Caco-2 (cell line): ENCODE measurements at regions of chrX and their contacts with region 1.

Region 1: DNA sequence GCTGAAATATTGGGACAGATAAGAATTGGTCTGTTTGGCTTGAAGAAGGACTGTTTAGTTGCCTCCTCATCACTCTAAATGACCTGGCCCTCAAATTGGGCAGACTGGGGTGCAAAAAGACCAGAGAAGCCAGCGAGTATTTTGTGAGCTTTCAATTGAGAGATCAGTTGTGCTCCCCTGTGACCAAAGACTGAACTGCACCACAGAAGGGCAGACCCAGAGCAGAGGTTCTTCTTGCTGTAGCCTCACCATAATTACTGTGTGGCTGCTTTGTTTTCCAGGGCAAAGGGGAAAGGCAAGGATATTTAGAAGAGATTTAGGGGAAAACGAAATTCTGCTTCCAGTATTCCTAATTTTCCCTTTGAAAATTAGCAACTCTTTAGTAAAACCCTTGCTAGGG is 104.0 kb upstream of the MBNL3 start:
- DNase-seq: peak; percentile 23 to 31
- H3K4me3 ChIP-seq: no peak overlapping the region
- H3K4me3 Mint-ChIP-seq: no peak overlapping the region
- H3K27ac Mint-ChIP-seq: no peak overlapping the region
- H3K4me1 ChIP-seq: peaks cover 20% of the 10 kb centered on the region
- H3K4me1 Mint-ChIP-seq: no peaks in the 10 kb centered on the region
- H3K27me3 ChIP-seq: no peaks in the 10 kb centered on the region
- H3K27me3 Mint-ChIP-seq: no peaks in the 10 kb centered on the region
- CTCF ChIP-seq: peak; percentile 41 to 52

Region 2: GRCh38 chrX:132488819-132489577 is 103.9 kb before region 1 on chrX and contains the start of gene MBNL3:
- CTCF ChIA-PET with region 1: interaction called, 5 read pairs
- POLR2A ChIA-PET with region 1: no interaction called
- intact Hi-C with region 1: loop called (anchors 1 kb)
- DNase-seq: peak; percentile 71
- H3K4me3 ChIP-seq: peak within 1 kb of the TSS; percentile 74
- H3K4me3 Mint-ChIP-seq: peak within 1 kb of the TSS; percentile 88
- H3K27ac Mint-ChIP-seq: peak within 1 kb of the TSS; percentile 63
- H3K4me1 ChIP-seq: peaks cover 18% of the 10 kb centered on the region; the same call in 1 of the 2 replicates
- H3K4me1 Mint-ChIP-seq: no peaks in the 10 kb centered on the region
- H3K27me3 ChIP-seq: no peaks in the 10 kb centered on the region
- H3K27me3 Mint-ChIP-seq: no peaks in the 10 kb centered on the region
- CTCF ChIP-seq: no peak
- total RNA-seq, gene MBNL3: 174 and 195 TPM in 2 replicates

Region 3: DNA sequence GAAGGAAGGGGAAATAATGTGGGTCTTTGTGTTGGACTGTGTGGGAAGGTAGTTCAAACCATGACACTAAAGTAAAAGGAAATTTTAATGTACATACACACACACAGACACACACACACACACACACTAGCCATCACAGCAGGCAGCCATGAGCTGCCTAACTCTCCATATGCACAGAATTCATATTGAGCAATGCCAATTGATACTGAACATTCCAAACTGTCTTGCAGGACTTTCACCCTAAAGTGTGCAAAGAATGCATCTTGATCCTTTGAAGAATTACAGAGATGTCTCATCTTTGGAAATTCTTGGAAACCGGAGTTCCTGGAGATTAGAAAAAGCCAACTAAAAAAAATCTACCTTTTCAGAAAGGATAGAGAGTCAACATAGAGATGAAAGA is 16.5 kb after region 1 on chrX:
- CTCF ChIA-PET with region 1: no interaction called
- POLR2A ChIA-PET with region 1: no interaction called
- intact Hi-C with region 1: loop called (anchors 1 kb)
- DNase-seq: peak; percentile 34 to 40
- H3K4me3 ChIP-seq: no peak overlapping the region
- H3K4me3 Mint-ChIP-seq: no peak overlapping the region
- H3K27ac Mint-ChIP-seq: peak overlapping the region; percentile 51
- H3K4me1 ChIP-seq: peaks cover 36% of the 10 kb centered on the region
- H3K4me1 Mint-ChIP-seq: peaks cover 23% of the 10 kb centered on the region
- H3K27me3 ChIP-seq: no peaks in the 10 kb centered on the region
- H3K27me3 Mint-ChIP-seq: no peaks in the 10 kb centered on the region
- CTCF ChIP-seq: no peak